ENCODE measurements at regions of chr13 and their contacts with region 1.

Region 1: GRCh38 chr13:41668130-41668757 is 210.9 kb downstream of the RGCC start:
- DNase-seq: peak; percentile 95
- ATAC-seq: peak; percentile 99
- H3K4me3 ChIP-seq: no peak overlapping the region
- H3K27ac ChIP-seq: no peak overlapping the region
- H3K4me1 ChIP-seq: no peaks in the 10 kb centered on the region
- H3K27me3 ChIP-seq: no peaks in the 10 kb centered on the region
- CTCF ChIP-seq: peak; percentile 92
- POLR2A ChIP-seq: no peak
- RAD21 ChIP-seq: peak; percentile 99

Region 2: GRCh38 chr13:41401366-41401765 is 266.9 kb before region 1 on chr13:
- CTCF ChIA-PET with region 1: no interaction called
- POLR2A ChIA-PET with region 1: no interaction called
- dilution Hi-C with region 1: no loop called
- in situ Hi-C with region 1: no loop called
- intact Hi-C with region 1: no loop called
- DNase-seq: no peak
- ATAC-seq: no peak
- H3K4me3 ChIP-seq: no peak overlapping the region
- H3K27ac ChIP-seq: no peak overlapping the region
- H3K4me1 ChIP-seq: no peaks in the 10 kb centered on the region
- H3K27me3 ChIP-seq: no peaks in the 10 kb centered on the region
- CTCF ChIP-seq: no peak
- POLR2A ChIP-seq: no peak
- RAD21 ChIP-seq: no peak

Region 3: DNA sequence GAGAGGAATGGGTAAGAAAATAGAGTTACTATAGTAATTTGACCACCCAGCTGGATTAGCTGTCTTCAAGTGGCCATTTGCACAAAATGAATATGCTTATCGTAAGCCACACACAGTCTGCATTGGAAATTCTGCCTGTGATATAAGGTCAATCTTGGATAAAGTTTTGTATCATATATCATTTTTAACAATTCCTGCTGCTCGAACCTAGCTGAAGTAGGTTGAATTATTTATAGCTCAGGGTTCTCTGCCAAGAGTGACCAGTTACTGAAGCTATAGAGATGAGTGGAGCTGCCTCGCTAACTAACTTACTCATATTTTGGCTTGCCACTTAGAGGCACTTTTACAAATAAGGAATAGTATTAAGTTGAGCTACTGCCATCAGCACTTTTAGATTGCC is 10.0 kb after region 1 on chr13:
- CTCF ChIA-PET with region 1: interaction called, 12 read pairs
- POLR2A ChIA-PET with region 1: no interaction called
- dilution Hi-C with region 1: no loop called
- in situ Hi-C with region 1: no loop called
- intact Hi-C with region 1: no loop called
- DNase-seq: peak; percentile 67
- ATAC-seq: peak; percentile 32; the same call in 1 of the 2 replicates
- H3K4me3 ChIP-seq: no peak overlapping the region
- H3K27ac ChIP-seq: no peak overlapping the region
- H3K4me1 ChIP-seq: peaks cover 4% of the 10 kb centered on the region; the same call in 1 of the 2 replicates
- H3K27me3 ChIP-seq: no peaks in the 10 kb centered on the region
- CTCF ChIP-seq: no peak
- POLR2A ChIP-seq: no peak
- RAD21 ChIP-seq: no peak

Region 4: DNA sequence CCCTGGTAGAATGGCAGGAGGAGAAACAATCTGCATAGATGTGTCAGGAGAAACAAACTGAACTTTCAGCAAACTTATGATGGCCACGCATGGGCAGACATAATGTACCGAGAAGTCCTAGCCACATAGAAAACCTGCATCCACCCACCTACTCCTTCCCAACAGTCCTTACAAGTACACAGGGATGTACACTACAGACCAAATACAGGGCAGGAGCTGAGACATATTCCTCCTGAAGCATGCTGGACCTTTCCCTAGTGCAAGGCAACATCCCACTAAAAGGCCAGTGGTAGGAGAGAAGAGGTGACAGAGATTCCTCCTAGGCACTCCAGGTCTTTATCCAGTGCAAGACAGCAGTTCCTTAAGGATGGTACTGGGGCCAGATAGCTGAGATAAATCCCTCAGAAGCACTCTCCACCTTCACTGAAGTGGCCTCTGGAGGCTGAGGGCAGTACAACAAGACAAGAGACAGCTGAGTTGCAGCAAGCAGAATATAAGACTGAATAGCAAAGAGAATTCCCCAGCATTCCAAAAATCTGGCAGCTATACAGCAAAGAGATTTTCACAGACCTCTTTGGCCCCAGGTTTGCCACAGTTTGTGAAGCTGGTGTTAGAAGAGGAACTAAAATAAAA is 274.3 kb after region 1 on chr13:
- CTCF ChIA-PET with region 1: interaction called, 10 read pairs
- POLR2A ChIA-PET with region 1: no interaction called
- dilution Hi-C with region 1: no loop called
- in situ Hi-C with region 1: no loop called
- intact Hi-C with region 1: loop called (anchors 10 kb)
- DNase-seq: peak; percentile 74
- ATAC-seq: peak; percentile 97
- H3K4me3 ChIP-seq: no peak overlapping the region
- H3K27ac ChIP-seq: no peak overlapping the region
- H3K4me1 ChIP-seq: peaks cover 5% of the 10 kb centered on the region; the same call in 1 of the 2 replicates
- H3K27me3 ChIP-seq: no peaks in the 10 kb centered on the region
- CTCF ChIP-seq: peak; percentile 54
- POLR2A ChIP-seq: no peak
- RAD21 ChIP-seq: peak; percentile 51

Region 5: DNA sequence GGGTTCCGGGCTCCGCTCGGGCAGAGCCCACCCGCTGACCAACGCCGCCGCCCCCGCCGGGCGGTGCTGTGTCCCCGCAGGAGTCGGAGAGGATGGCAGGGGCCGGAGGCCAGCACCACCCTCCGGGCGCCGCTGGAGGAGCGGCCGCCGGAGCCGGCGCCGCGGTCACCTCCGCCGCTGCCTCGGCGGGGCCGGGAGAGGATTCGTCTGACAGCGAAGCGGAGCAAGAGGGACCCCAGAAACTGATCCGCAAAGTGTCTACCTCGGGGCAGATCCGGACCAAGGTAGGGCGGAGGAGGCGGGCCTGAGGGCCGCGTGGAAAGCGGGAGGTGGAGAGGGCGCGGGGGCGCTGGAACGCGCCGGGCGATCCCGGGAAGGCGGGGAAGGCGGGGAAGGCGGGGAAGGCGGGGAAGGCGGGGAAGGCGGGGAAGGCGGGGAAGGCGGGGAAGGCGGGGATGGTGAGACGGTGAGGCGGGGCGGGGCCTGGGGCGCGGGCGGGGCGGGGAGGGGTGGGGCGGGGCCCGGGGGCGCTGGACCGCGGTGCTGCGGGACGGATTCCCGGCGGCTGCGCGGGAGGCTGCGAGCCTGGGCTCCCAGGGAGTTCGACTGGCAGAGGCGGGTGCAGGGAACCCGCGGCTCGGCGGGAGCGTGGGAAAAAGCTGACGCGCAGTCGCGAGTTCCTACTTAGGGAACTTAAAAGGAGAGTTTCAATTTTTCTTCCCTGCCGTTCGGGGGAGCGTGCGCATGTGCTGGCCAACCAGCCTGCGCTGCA is 380.6 kb after region 1 on chr13:
- CTCF ChIA-PET with region 1: interaction called, 4 read pairs
- POLR2A ChIA-PET with region 1: no interaction called
- dilution Hi-C with region 1: no loop called
- in situ Hi-C with region 1: loop called (anchors 10 kb)
- intact Hi-C with region 1: loop called (anchors 2 kb)
- DNase-seq: peak; percentile 78
- ATAC-seq: peak; percentile 79
- H3K4me3 ChIP-seq: peak overlapping the region; percentile 96
- H3K27ac ChIP-seq: peak overlapping the region; percentile 75
- H3K4me1 ChIP-seq: no peaks in the 10 kb centered on the region
- H3K27me3 ChIP-seq: no peaks in the 10 kb centered on the region
- CTCF ChIP-seq: peak; percentile 31
- POLR2A ChIP-seq: peak; percentile 39; the same call in 1 of the 2 replicates
- RAD21 ChIP-seq: peak; percentile 39

Region 6: GRCh38 chr13:42110410-42111155 is 442.3 kb after region 1 on chr13:
- CTCF ChIA-PET with region 1: interaction called, 12 read pairs
- POLR2A ChIA-PET with region 1: no interaction called
- dilution Hi-C with region 1: no loop called
- in situ Hi-C with region 1: loop called (anchors 5 kb)
- intact Hi-C with region 1: loop called (anchors 1 kb)
- DNase-seq: peak; percentile 82
- ATAC-seq: peak; percentile 67
- H3K4me3 ChIP-seq: no peak overlapping the region
- H3K27ac ChIP-seq: no peak overlapping the region
- H3K4me1 ChIP-seq: peaks cover 3% of the 10 kb centered on the region; the same call in 1 of the 2 replicates
- H3K27me3 ChIP-seq: no peaks in the 10 kb centered on the region
- CTCF ChIP-seq: peak; percentile 84
- POLR2A ChIP-seq: no peak
- RAD21 ChIP-seq: peak; percentile 88

Region 7: GRCh38 chr13:42215578-42216421 is 547.6 kb after region 1 on chr13:
- CTCF ChIA-PET with region 1: no interaction called
- POLR2A ChIA-PET with region 1: no interaction called
- dilution Hi-C with region 1: no loop called
- in situ Hi-C with region 1: no loop called
- intact Hi-C with region 1: loop called (anchors 5 kb)
- DNase-seq: peak; percentile 60
- ATAC-seq: peak; percentile 91
- H3K4me3 ChIP-seq: no peak overlapping the region
- H3K27ac ChIP-seq: no peak overlapping the region
- H3K4me1 ChIP-seq: no peaks in the 10 kb centered on the region
- H3K27me3 ChIP-seq: no peaks in the 10 kb centered on the region
- CTCF ChIP-seq: peak; percentile 64
- POLR2A ChIP-seq: no peak
- RAD21 ChIP-seq: peak; percentile 61